Lower leg skin (tissue), 4 donors: ENCODE measurements at regions of chr19 and their contacts with region 1.

Region 1: GRCh38 chr19:18571564-18572300 is at the start of gene UBA52:
- DNase-seq: peak; percentile 97 to 100
- H3K4me3 ChIP-seq: peak within 1 kb of the TSS; percentile 87
- CTCF ChIP-seq: no peak
- POLR2A ChIP-seq: no peak
- total RNA-seq, gene UBA52: 625 to 1,001 (median 848) TPM

Region 2: DNA sequence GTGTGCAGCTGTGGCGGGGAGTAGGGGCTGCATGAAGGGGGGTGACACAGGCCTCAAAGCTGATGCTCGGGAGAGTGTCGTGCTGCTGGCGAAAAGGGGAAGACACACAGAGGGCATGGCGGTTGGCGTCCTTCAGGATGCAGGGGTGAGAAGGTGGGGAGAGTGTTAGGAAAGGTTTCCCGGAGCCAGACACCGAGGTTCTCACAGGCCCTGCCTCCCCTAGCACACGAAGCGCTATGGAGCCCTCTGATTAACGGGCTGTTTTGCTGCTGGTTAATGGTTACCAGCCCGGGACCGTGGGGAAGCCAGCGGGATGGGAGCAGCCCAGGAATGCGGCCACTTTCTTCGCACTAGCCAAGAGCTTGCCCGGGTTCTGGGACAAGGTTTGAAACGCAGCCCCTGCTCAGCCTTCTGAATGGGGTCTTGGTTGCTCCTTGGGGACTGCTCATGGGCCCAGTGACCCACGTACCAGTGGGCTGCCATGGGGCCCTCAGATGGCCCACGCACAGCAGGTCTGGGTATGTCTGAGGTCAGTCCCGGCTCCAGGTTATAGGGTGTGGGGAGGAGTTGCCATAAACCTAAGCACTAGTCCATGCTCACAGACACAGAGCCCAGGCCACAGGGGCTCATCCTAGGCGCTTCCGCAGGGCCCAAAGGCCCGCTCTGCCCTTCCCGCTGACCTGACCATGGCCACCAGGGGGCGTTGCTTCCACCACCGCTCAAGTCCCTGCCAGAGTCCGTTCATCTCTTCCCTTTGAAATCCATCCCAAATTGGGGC is 102.5 kb before region 1 on chr19:
- intact Hi-C with region 1: loop called (anchors 10 kb)
- DNase-seq: peak in 1 of 2 donors; percentile 94
- H3K4me3 ChIP-seq: no peak overlapping the region
- CTCF ChIP-seq: peak in 1 of 3 donors; percentile 52
- POLR2A ChIP-seq: no peak

Region 3: GRCh38 chr19:18480006-18480691 is 91.6 kb before region 1 on chr19:
- intact Hi-C with region 1: no loop called
- DNase-seq: peak; percentile 85 to 96
- H3K4me3 ChIP-seq: no peak overlapping the region
- CTCF ChIP-seq: no peak
- POLR2A ChIP-seq: no peak

Region 4: GRCh38 chr19:18644196-18645034 is 72.7 kb after region 1 on chr19:
- intact Hi-C with region 1: no loop called
- DNase-seq: no peak
- H3K4me3 ChIP-seq: no peak overlapping the region
- CTCF ChIP-seq: no peak
- POLR2A ChIP-seq: no peak